ENCODE measurements at regions of chr13 and their contacts with region 1.

Region 1: DNA sequence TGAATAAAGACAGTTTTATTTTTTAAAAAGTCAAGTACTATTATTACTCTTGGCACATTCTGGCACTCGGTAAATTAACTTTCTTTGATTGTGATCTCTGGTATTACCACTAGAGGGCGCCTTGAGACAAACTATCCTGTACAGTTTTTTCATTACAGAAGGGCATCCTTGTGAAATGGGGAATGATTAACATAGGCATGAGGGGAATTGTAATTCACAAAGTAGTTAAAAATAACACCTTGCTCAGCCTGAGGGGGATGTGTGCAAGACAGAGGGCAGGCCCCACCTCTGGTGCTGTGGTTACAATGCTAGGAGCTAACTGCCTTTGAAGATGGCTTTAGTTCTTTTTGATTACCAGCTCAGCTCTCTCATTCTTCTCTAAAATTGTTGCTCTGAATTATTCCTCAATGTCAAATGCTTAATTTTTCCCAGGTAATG is 24.2 kb upstream of the C1QTNF9B start:
- DNase-seq: no peak
- ATAC-seq: peak in 3 of 4 donors; percentile 58 to 63 (median 58)
- H3K4me3 ChIP-seq: no peak overlapping the region
- H3K27ac ChIP-seq: no peak overlapping the region
- H3K4me1 ChIP-seq: peaks cover 0 to 8% (median 0%) of the 10 kb centered on the region in 12 donors
- H3K27me3 ChIP-seq: peaks cover 0 to 9% (median 0%) of the 10 kb centered on the region in 9 donors
- CTCF ChIP-seq: peak; percentile 64 to 84 (median 74)
- POLR2A ChIP-seq: no peak

Region 2: GRCh38 chr13:24012648-24013047 is 91.2 kb after region 1 on chr13:
- intact Hi-C with region 1: loop called in 4 of 10 experiments (anchors 10 kb)
- DNase-seq: no peak
- ATAC-seq: no peak
- H3K4me3 ChIP-seq: no peak overlapping the region
- H3K27ac ChIP-seq: no peak overlapping the region
- H3K4me1 ChIP-seq: peaks cover 0 to 7% (median 0%) of the 10 kb centered on the region in 12 donors
- H3K27me3 ChIP-seq: no peaks in the 10 kb centered on the region
- CTCF ChIP-seq: no peak
- POLR2A ChIP-seq: no peak

Region 3: DNA sequence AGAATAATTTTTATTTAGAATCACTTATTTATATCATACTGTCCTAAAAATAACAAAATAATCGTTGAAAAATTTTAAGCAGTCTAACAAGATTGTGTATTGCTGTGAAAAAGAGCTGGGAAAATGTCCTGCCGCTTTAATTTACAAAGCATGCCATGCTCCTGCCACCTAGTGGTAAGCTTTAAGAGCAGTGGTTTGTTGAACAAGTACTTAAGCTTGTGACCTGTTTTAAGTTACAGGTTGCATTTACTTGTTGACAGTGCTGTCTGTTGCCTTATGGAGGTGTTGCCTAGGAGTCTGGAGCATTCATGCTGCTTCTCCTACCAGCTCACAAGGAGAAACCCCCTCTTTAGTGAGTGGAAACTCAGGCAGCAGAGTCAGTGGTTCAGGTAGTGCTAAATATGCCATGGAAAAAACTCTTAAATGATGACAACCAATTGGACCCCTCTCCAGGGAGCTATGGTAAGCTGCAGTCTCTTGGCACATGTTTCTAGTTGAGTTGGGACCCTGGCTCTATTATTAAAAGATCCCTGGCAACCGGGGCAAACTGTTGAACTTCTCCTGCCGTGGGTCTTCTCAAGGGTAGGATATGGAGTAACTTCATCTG is 307.5 kb after region 1 on chr13:
- intact Hi-C with region 1: loop called in 3 of 10 experiments (anchors 2 to 5 kb)
- DNase-seq: peak in 1 of 5 donors; percentile 33
- ATAC-seq: peak in 3 of 4 donors; percentile 35 to 51 (median 44)
- H3K4me3 ChIP-seq: no peak overlapping the region
- H3K27ac ChIP-seq: no peak overlapping the region
- H3K4me1 ChIP-seq: peaks cover 0 to 18% (median 4%) of the 10 kb centered on the region in 12 donors
- H3K27me3 ChIP-seq: no peaks in the 10 kb centered on the region
- CTCF ChIP-seq: peak; percentile 74 to 91 (median 87)
- POLR2A ChIP-seq: no peak

Measured in heart left ventricle (tissue), 16 donors.